Naive thymus-derived CD4-positive, alpha-beta T cell (primary cell): ENCODE measurements at regions of chr7 and their contacts with region 1.

Region 1: GRCh38 chr7:111953611-111954010 is 252.6 kb downstream of the DOCK4 start:
- DNase-seq: peak in 1 of 9 donors; percentile 1
- ATAC-seq: no peak
- H3K4me3 ChIP-seq: no peak overlapping the region
- H3K4me3 Mint-ChIP-seq: no peak overlapping the region
- H3K27ac ChIP-seq: no peak overlapping the region
- H3K27ac Mint-ChIP-seq: no peak overlapping the region
- H3K4me1 ChIP-seq: no peaks in the 10 kb centered on the region
- H3K4me1 Mint-ChIP-seq: peaks cover 0 to 2% (median 0%) of the 10 kb centered on the region in 7 donors
- H3K27me3 ChIP-seq: no peaks in the 10 kb centered on the region
- H3K27me3 Mint-ChIP-seq: peaks cover 0 to 9% (median 0%) of the 10 kb centered on the region in 5 donors

Region 2: GRCh38 chr7:112414855-112415490 is 461.4 kb after region 1 on chr7:
- CTCF ChIA-PET with region 1: no interaction called
- POLR2A ChIA-PET with region 1: no interaction called
- intact Hi-C with region 1: loop called in 1 of 2 experiments (anchors 10 kb)
- DNase-seq: peak in 2 of 9 donors; percentile 15 to 17
- ATAC-seq: no peak
- H3K4me3 ChIP-seq: no peak overlapping the region
- H3K4me3 Mint-ChIP-seq: no peak overlapping the region
- H3K27ac ChIP-seq: no peak overlapping the region
- H3K27ac Mint-ChIP-seq: no peak overlapping the region
- H3K4me1 ChIP-seq: no peaks in the 10 kb centered on the region
- H3K4me1 Mint-ChIP-seq: peaks cover 0 to 5% (median 4%) of the 10 kb centered on the region in 7 donors
- H3K27me3 ChIP-seq: no peaks in the 10 kb centered on the region
- H3K27me3 Mint-ChIP-seq: peaks cover 4 to 29% (median 8%) of the 10 kb centered on the region in 5 donors

Region 3: DNA sequence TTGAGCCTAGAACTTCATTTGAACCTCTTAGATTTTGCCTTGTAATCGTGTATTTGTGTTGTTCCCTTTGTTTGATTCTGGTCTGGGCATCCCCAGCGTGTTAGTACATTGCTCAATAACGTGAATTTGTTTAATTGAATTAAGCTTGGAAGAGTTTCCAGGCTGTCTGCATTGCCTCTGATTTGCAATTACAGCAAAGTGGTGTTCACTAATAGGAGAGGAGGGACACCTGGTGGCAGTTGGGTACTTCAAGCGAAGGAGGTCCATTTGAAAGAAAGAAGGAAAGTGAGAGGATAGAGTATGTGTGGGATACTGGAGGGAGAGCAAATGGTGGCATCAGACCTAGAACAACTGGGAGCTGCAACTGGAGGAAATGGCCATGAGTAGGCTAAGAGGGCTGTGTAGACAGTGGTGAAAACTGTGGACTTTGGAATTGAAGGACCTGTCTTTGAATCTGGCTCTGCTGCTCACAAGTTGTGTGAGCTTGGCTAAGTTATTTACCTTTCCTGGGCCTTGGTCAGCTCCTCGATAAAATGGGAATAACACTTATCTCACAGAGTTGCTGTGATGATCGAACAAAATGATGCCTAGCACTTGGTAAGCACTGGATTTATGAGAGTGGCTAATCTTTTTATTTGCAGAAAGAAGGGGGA is 542.3 kb after region 1 on chr7:
- CTCF ChIA-PET with region 1: no interaction called
- POLR2A ChIA-PET with region 1: no interaction called
- intact Hi-C with region 1: loop called in 1 of 2 experiments (anchors 10 kb)
- DNase-seq: peak in 6 of 9 donors; percentile 2 to 28 (median 18)
- ATAC-seq: no peak
- H3K4me3 ChIP-seq: no peak overlapping the region
- H3K4me3 Mint-ChIP-seq: no peak overlapping the region
- H3K27ac ChIP-seq: no peak overlapping the region
- H3K27ac Mint-ChIP-seq: no peak overlapping the region
- H3K4me1 ChIP-seq: no peaks in the 10 kb centered on the region
- H3K4me1 Mint-ChIP-seq: no peaks in the 10 kb centered on the region
- H3K27me3 ChIP-seq: no peaks in the 10 kb centered on the region
- H3K27me3 Mint-ChIP-seq: peaks cover 4 to 24% (median 5%) of the 10 kb centered on the region in 5 donors